Right ventricle myocardium inferior (tissue), 1 donor: ENCODE measurements at regions of chr1 and their contacts with region 1.

Region 1: GRCh38 chr1:157704878-157705277 is 4.3 kb upstream of the FCRL3 start:
- DNase-seq: no peak
- ATAC-seq: no peak

Region 2: GRCh38 chr1:157359309-157360022 is 345.4 kb before region 1 on chr1:
- intact Hi-C with region 1: no loop called
- DNase-seq: no peak
- ATAC-seq: no peak

Region 3: GRCh38 chr1:157575744-157576143 is 129.1 kb before region 1 on chr1:
- intact Hi-C with region 1: no loop called
- DNase-seq: no peak
- ATAC-seq: no peak

Region 4: DNA sequence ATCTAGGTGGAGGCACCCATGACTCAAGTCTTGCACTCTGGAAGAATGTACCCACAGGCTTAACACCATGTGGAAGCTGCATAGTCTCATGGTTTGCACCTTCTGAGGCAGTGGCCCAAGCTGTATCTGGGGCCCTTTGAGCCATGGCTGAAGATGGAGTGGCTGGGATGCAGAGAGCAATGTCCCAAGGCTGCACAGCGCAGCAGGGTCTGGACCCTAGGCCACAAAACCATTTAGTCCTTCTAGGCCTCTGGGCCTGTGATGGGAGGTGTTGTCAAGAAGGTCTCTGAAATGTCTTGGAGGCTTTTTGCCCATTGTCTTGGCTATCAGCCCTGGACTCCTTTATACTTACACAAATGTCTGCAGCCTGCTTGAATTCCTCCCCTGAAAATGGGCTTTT is 17.1 kb after region 1 on chr1:
- intact Hi-C with region 1: loop called (anchors 1 kb)
- DNase-seq: no peak
- ATAC-seq: no peak